ENCODE measurements at regions of chr4 and their contacts with region 1.

Region 1: DNA sequence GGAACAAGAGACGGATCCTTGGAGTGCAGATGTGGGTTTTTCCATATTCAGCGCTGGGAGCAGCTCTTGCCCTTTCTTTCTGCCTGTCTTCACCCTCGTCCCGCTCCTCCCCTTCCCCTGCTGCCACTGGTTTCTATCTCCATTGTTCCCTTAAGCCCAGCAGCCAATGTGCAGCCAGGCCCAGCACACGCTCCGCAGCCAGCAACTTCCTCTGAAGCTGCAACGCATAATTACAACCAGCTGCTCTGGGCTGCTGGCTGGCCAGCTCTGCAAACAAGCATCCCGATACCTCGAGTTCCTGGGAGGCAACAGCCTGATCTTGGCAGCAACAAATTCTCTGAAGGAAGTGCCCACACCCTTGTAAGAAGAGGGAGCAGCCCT is 83.6 kb upstream of the MAML3 start:
- DNase-seq: peak; percentile 92
- H3K4me3 ChIP-seq: peak overlapping the region in 3 of 4 donors; percentile 10 to 31 (median 29)
- H3K27ac ChIP-seq: peak overlapping the region; percentile 82 to 91 (median 87)
- H3K4me1 ChIP-seq: peaks cover 0 to 56% (median 42%) of the 10 kb centered on the region in 4 donors
- H3K27me3 ChIP-seq: no peaks in the 10 kb centered on the region
- CTCF ChIP-seq: no peak
- EP300 ChIP-seq: no peak
- POLR2A ChIP-seq: peak; percentile 32 to 49

Region 2: DNA sequence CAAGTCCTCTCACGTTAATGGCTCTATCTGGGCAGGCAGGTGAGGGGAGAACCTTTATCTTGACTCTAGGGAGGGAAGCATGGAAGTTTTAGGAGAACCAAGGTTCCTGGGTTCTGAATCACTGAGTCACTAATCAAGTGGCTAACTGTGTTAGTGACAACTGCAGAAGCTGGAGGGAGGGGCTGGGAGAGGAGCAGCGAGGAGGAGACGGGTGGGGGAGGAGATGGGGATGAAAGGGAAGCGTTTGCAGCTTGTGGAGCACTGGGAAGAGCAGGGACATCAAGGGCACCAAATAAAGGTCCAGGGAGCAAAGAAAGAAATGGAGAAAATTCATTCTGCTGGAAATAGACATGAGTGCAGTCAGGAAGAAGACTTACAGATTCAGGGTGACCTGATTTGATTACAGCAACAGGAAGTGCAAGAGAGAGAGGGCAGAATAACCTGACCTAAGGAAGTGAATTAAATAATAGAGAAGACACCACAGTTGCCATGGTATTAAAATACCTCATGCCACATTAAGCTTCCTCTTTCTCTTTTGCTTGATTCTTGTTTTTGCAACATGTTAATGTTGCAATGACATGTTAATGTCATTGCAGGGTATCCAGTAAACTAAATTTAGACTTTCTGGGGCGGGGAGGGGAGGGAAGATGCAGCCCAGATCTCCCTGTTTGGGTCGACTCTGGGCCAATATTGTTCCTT is 677.0 kb before region 1 on chr4:
- intact Hi-C with region 1: loop called (anchors 5 kb)
- DNase-seq: no peak
- H3K4me3 ChIP-seq: no peak overlapping the region
- H3K27ac ChIP-seq: peak overlapping the region in 3 of 4 donors; percentile 27 to 51 (median 34)
- H3K4me1 ChIP-seq: peaks cover 0 to 56% (median 43%) of the 10 kb centered on the region in 4 donors
- H3K27me3 ChIP-seq: no peaks in the 10 kb centered on the region
- CTCF ChIP-seq: no peak
- EP300 ChIP-seq: no peak
- POLR2A ChIP-seq: no peak

Region 3: DNA sequence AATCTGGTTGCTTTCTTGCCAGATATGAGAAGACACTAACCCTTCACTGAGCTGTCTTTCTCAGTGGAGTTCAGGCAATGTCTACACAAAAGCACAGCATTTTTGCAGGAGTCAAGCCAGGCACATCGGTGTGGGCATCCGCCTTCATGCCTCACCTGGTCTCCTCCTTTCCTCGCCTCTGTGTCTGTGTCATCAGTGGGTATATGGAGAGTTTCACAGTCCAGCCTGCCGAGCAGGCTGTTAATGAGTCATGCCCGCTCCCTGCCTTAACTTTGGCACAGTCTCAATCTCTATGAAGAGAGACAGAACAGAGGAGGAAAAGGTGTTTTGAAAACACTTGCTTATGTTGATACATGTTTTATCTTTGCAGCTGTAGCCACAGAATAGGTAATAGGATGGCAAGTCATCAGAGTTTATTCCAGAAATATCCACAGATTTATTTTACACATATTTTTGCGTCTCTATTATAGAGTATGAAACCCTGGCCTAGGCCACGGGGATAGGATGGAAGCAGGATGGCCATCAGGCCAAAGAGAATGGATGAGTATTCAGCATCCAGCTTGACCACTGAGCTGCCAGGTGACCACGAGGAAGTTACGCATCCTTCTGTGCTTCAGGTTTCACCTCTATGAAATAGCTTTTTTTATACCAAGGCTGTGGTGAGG is 50.8 kb before region 1 on chr4:
- intact Hi-C with region 1: loop called (anchors 5 kb)
- DNase-seq: peak; percentile 80
- H3K4me3 ChIP-seq: no peak overlapping the region
- H3K27ac ChIP-seq: peak overlapping the region in 3 of 4 donors; percentile 23 to 70 (median 68)
- H3K4me1 ChIP-seq: peaks cover 0 to 34% (median 28%) of the 10 kb centered on the region in 4 donors
- H3K27me3 ChIP-seq: no peaks in the 10 kb centered on the region
- CTCF ChIP-seq: no peak
- EP300 ChIP-seq: no peak
- POLR2A ChIP-seq: no peak